ENCODE measurements at regions of chr22 and their contacts with region 1.

Region 1: DNA sequence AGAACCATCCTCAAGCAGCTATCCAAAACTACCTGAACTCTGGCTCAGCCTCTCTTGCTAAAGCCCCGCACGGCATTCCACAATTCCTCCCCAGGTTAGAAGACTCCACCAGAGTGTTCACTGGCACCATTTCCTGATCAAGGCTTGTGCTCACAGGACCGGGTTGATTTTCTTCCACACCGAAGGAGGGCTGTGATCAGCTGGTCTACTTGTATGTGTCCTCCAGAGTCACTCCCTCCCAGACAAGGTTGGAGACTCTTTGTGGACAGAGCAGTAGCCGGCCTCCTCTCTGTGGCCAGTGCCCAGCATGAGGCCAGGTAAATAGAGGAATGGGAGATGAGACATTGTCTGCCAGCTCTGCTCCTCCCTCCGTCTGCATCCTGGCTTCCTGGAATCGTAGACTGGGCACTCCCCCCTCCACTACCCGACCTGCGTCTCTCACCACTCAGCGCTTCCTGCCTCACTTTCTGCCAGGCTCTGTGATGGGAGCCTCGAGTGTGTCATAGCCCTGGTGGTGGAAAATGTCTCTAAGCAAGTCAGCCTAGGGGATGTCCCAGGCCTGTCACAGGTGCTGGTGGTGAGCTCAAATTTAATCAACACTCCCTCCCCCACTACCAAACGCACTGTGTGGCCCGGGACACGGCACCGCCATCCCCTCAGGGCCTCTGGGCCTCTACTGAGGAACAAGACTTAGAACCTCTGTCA is 12.5 kb upstream of the TMPRSS6 start:
- DNase-seq: peak; percentile 65 to 98 (median 93)
- ATAC-seq: peak; percentile 97 to 99 (median 98)
- H3K4me3 ChIP-seq: peak overlapping the region in 1 of 2 donors; percentile 31
- H3K4me3 Mint-ChIP-seq: peak overlapping the region; percentile 63 to 78 (median 78)
- H3K27ac ChIP-seq: peak overlapping the region; percentile 93
- H3K27ac Mint-ChIP-seq: peak overlapping the region; percentile 97 to 99
- H3K4me1 ChIP-seq: peaks cover 17 to 48% of the 10 kb centered on the region in 2 experiments
- H3K4me1 Mint-ChIP-seq: peaks cover 59 to 68% (median 62%) of the 10 kb centered on the region in 3 donors
- H3K27me3 ChIP-seq: no peaks in the 10 kb centered on the region
- H3K27me3 Mint-ChIP-seq: no peaks in the 10 kb centered on the region

Region 2: GRCh38 chr22:37077884-37078485 is 44.1 kb before region 1 on chr22:
- CTCF ChIA-PET with region 1: interaction called in 1 of 2 experiments, 62 read pairs
- POLR2A ChIA-PET with region 1: interaction called, 8 to 21 read pairs
- DNase-seq: peak; percentile 47 to 90 (median 79)
- ATAC-seq: peak in 3 of 4 experiments; percentile 21 to 57 (median 37)
- H3K4me3 ChIP-seq: no peak overlapping the region
- H3K4me3 Mint-ChIP-seq: peak overlapping the region in 2 of 3 donors; percentile 18 to 70
- H3K27ac ChIP-seq: peak overlapping the region; percentile 67
- H3K27ac Mint-ChIP-seq: peak overlapping the region; percentile 89 to 96
- H3K4me1 ChIP-seq: peaks cover 19 to 48% of the 10 kb centered on the region in 2 experiments
- H3K4me1 Mint-ChIP-seq: peaks cover 37 to 50% (median 50%) of the 10 kb centered on the region in 3 donors
- H3K27me3 ChIP-seq: peaks cover 0 to 26% of the 10 kb centered on the region in 2 experiments
- H3K27me3 Mint-ChIP-seq: peaks cover 3 to 10% of the 10 kb centered on the region in 2 donors

Region 3: GRCh38 chr22:37148742-37149665 is 27.0 kb after region 1 on chr22:
- CTCF ChIA-PET with region 1: interaction called in 1 of 2 experiments, 49 read pairs
- POLR2A ChIA-PET with region 1: interaction called, 9 to 10 read pairs
- DNase-seq: peak in 1 of 35 experiments; percentile 20
- ATAC-seq: peak in 2 of 4 experiments; percentile 12 to 18
- H3K4me3 ChIP-seq: peak overlapping the region; percentile 56 to 96
- H3K4me3 Mint-ChIP-seq: peak overlapping the region; percentile 75 to 93 (median 87)
- H3K27ac ChIP-seq: peak overlapping the region; percentile 94
- H3K27ac Mint-ChIP-seq: peak overlapping the region; percentile 96 to 98
- H3K4me1 ChIP-seq: peaks cover 11 to 58% of the 10 kb centered on the region in 2 experiments
- H3K4me1 Mint-ChIP-seq: peaks cover 65 to 73% (median 72%) of the 10 kb centered on the region in 3 donors
- H3K27me3 ChIP-seq: no peaks in the 10 kb centered on the region
- H3K27me3 Mint-ChIP-seq: no peaks in the 10 kb centered on the region

Region 4: DNA sequence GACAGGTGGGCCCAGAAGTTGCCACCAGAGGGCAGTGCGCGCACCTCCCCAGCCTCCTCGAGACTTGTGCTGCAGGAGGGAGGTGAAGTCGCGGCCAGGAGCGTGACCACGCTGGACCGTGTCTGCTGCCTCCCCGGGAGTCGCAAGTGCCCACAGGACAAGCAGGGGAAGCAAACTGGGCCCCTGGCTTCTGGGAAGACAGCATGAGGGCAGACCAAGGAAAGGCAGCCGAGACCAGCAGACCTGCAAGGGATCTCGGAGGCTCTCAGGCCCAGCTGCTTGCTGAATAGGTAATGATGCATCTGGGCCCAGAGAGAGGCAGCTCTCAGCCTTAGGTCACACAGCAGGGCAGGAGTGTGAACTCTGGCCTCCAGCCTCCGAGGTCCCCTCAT is 44.6 kb after region 1 on chr22:
- CTCF ChIA-PET with region 1: interaction called, 3 to 20 read pairs
- POLR2A ChIA-PET with region 1: no interaction called
- DNase-seq: peak; percentile 54 to 92 (median 78)
- ATAC-seq: peak; percentile 60 to 76 (median 68)
- H3K4me3 ChIP-seq: peak overlapping the region in 1 of 2 donors; percentile 31
- H3K4me3 Mint-ChIP-seq: peak overlapping the region; percentile 74 to 85 (median 82)
- H3K27ac ChIP-seq: peak overlapping the region; percentile 45
- H3K27ac Mint-ChIP-seq: peak overlapping the region; percentile 96 to 97
- H3K4me1 ChIP-seq: peaks cover 20 to 94% of the 10 kb centered on the region in 2 experiments
- H3K4me1 Mint-ChIP-seq: peaks cover 84 to 97% (median 94%) of the 10 kb centered on the region in 3 donors
- H3K27me3 ChIP-seq: no peaks in the 10 kb centered on the region
- H3K27me3 Mint-ChIP-seq: no peaks in the 10 kb centered on the region

Region 5: DNA sequence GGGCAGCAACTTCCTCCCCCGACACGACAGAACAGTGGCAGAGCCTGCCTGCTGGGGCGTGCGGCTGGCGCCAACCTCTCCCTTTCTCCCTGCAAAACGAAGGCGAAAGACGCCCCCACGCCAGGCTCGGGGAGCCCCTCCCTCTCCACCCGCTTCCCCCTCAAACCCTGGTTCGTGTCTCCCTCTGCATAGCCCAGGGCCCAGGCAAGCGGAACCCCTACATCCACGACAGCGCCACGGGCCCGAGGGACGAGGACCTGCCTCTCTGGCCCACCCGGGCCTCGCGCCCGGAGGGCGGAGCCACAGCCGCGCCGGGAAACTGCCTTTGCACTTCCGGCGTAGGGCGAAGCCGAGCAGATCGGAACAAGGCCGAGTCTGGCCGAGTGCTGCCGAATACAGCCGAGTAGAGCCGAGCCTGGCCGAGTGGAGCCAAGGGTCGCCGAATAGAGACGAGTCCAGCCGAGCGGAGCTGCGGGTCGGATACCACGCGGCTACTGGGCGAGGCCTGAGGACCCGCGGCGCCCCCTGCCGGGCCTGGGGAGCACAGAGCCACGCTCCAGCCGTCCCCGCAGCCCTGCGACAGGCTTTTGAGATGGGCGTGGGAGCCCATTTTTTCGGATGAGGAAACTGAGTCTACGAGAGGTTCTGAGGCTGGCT is 77.2 kb after region 1 on chr22:
- CTCF ChIA-PET with region 1: interaction called in 1 of 2 experiments, 15 read pairs
- POLR2A ChIA-PET with region 1: no interaction called
- DNase-seq: peak; percentile 90 to 100 (median 97)
- ATAC-seq: peak; percentile 93 to 97 (median 95)
- H3K4me3 ChIP-seq: peak overlapping the region; percentile 55 to 78
- H3K4me3 Mint-ChIP-seq: peak overlapping the region; percentile 81 to 86 (median 84)
- H3K27ac ChIP-seq: peak overlapping the region; percentile 94
- H3K27ac Mint-ChIP-seq: peak overlapping the region; percentile 97 to 98
- H3K4me1 ChIP-seq: peaks cover 15 to 54% of the 10 kb centered on the region in 2 experiments
- H3K4me1 Mint-ChIP-seq: peaks cover 37 to 56% (median 47%) of the 10 kb centered on the region in 3 donors
- H3K27me3 ChIP-seq: no peaks in the 10 kb centered on the region
- H3K27me3 Mint-ChIP-seq: no peaks in the 10 kb centered on the region

Region 6: GRCh38 chr22:37229805-37230672 is 108.0 kb after region 1 on chr22:
- CTCF ChIA-PET with region 1: no interaction called
- POLR2A ChIA-PET with region 1: interaction called in 1 of 2 experiments, 10 read pairs
- DNase-seq: peak; percentile 74 to 95 (median 91)
- ATAC-seq: peak; percentile 80 to 87 (median 81)
- H3K4me3 ChIP-seq: peak overlapping the region; percentile 34 to 62
- H3K4me3 Mint-ChIP-seq: peak overlapping the region; percentile 66 to 97 (median 71)
- H3K27ac ChIP-seq: peak overlapping the region; percentile 95
- H3K27ac Mint-ChIP-seq: peak overlapping the region; percentile 97 to 99
- H3K4me1 ChIP-seq: peaks cover 73 to 96% of the 10 kb centered on the region in 2 experiments
- H3K4me1 Mint-ChIP-seq: peaks cover 87 to 92% (median 89%) of the 10 kb centered on the region in 3 donors
- H3K27me3 ChIP-seq: no peaks in the 10 kb centered on the region
- H3K27me3 Mint-ChIP-seq: no peaks in the 10 kb centered on the region

Measured in T-cell (primary cell).